ENCODE measurements at regions of chr15 and their contacts with region 1.

Region 1: DNA sequence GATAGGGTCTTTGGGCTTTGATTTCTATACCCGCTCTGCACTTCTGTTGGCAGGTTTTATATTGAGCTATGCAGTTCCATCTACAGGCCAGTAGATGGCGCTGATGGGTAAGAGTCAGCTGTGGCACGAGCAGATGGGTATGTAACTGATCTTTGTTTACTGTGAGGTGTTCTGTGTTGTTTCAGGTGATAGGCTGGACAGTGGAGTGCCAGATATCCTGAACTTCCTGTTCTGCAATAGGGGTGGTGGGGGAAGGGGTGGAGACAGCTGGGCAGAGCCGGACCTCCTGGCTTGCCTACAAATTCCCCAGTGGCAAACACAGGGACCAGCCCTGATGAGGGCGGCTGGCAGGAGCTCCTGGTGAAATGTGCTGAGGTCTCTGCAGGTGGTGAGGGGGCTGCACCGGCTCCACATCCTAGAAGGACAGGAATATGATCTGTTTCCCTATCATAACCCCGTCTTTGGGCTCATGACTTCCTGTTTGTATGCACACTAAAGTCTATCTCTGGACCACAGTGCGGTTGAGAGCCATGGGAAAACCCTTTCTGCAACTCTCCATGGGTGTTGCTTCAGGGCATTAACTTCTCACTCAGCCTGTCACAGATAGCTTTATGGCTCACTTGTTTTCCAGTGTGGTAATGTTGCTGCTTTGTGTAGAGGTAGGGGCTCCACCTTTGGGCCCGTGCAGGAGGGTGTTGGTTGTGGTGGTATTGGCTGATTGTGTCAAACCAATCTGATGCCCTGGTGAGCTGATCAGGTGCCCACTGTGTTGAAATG is 13.4 kb upstream of the FAM98B start:
- DNase-seq: peak; percentile 41
- H3K4me3 Mint-ChIP-seq: no peak overlapping the region
- H3K27ac Mint-ChIP-seq: no peak overlapping the region
- H3K4me1 Mint-ChIP-seq: no peaks in the 10 kb centered on the region
- H3K27me3 Mint-ChIP-seq: no peaks in the 10 kb centered on the region
- CTCF ChIP-seq: peak; percentile 45

Region 2: GRCh38 chr15:38351466-38351865 is 89.1 kb before region 1 on chr15:
- CTCF ChIA-PET with region 1: no interaction called
- intact Hi-C with region 1: no loop called
- DNase-seq: no peak
- H3K4me3 Mint-ChIP-seq: no peak overlapping the region
- H3K27ac Mint-ChIP-seq: no peak overlapping the region
- H3K4me1 Mint-ChIP-seq: no peaks in the 10 kb centered on the region
- H3K27me3 Mint-ChIP-seq: no peaks in the 10 kb centered on the region
- CTCF ChIP-seq: no peak

Region 3: GRCh38 chr15:38389924-38390542 is 50.5 kb before region 1 on chr15:
- CTCF ChIA-PET with region 1: no interaction called
- intact Hi-C with region 1: no loop called
- DNase-seq: peak; percentile 71
- H3K4me3 Mint-ChIP-seq: no peak overlapping the region
- H3K27ac Mint-ChIP-seq: no peak overlapping the region
- H3K4me1 Mint-ChIP-seq: no peaks in the 10 kb centered on the region
- H3K27me3 Mint-ChIP-seq: peaks cover 8% of the 10 kb centered on the region
- CTCF ChIP-seq: peak; percentile 41

Region 4: DNA sequence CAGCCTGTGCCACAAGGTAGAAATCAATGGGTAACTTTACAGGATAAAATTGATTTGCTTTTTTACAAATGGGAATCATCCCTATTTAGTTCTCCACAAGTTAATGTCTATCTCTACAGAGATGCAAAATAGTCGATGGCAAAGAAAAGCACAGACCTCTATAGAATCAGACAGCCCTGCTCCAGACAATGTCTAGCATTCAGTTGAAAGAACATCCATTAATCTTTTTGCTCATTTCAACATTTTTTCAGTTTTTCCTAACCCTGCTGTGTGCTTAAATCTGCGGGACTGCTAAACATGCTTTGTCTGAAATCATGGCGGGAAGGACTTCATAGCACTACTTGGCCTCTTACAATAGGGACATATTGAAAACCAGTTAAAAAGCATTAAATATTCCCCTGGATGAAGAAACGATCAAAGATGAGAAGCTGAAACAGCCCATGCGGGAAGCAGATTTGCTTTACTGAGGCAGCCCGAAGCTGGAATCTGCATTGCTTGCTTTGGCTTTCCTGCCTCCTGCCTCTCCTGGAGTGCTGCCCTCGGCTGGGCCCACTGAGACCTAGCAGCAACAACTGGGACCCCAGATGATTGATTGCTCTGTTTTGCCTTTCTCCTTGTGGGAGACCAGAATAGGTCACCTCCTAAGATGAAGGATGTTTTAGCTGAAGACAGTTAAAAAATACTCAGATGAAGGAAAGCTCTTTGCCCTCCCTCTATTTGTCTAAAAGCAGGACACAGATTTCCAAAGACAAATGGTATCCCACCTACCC is 162.5 kb after region 1 on chr15:
- CTCF ChIA-PET with region 1: no interaction called
- intact Hi-C with region 1: no loop called
- DNase-seq: no peak
- H3K4me3 Mint-ChIP-seq: no peak overlapping the region
- H3K27ac Mint-ChIP-seq: no peak overlapping the region
- H3K4me1 Mint-ChIP-seq: no peaks in the 10 kb centered on the region
- H3K27me3 Mint-ChIP-seq: no peaks in the 10 kb centered on the region
- CTCF ChIP-seq: no peak

Region 5: DNA sequence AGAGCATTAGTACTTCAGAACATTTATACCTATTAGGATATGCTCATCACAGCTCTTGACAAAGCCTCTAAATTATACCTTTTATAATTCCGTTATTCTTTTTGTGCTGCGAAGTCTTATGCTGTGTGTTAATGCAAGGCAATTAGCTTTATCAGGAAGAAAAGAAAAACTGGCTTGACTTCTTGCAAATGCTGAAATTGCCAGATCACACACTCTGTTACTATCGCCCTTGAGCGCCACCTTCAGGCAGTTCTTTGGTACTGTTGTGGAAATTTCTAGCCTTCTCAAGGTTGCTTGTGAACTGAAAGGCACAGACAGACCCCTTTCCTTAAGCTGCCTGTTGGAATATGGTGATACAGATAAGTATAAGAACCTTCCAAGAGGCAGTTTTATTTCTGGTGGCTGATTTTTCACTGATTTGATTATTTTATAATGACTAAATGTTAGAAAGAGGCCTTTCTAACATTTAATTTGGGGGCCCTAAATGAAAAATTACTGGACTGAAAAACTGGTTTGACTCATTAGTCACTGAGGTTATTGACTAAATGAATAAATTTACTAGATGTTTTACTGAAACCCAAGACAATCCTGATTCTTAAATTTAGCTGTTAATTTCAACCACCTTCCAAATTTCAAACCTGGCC is 250.3 kb after region 1 on chr15:
- CTCF ChIA-PET with region 1: interaction called, 10 read pairs
- intact Hi-C with region 1: no loop called
- DNase-seq: peak; percentile 62
- H3K4me3 Mint-ChIP-seq: no peak overlapping the region
- H3K27ac Mint-ChIP-seq: no peak overlapping the region
- H3K4me1 Mint-ChIP-seq: no peaks in the 10 kb centered on the region
- H3K27me3 Mint-ChIP-seq: no peaks in the 10 kb centered on the region
- CTCF ChIP-seq: peak; percentile 45

Region 6: DNA sequence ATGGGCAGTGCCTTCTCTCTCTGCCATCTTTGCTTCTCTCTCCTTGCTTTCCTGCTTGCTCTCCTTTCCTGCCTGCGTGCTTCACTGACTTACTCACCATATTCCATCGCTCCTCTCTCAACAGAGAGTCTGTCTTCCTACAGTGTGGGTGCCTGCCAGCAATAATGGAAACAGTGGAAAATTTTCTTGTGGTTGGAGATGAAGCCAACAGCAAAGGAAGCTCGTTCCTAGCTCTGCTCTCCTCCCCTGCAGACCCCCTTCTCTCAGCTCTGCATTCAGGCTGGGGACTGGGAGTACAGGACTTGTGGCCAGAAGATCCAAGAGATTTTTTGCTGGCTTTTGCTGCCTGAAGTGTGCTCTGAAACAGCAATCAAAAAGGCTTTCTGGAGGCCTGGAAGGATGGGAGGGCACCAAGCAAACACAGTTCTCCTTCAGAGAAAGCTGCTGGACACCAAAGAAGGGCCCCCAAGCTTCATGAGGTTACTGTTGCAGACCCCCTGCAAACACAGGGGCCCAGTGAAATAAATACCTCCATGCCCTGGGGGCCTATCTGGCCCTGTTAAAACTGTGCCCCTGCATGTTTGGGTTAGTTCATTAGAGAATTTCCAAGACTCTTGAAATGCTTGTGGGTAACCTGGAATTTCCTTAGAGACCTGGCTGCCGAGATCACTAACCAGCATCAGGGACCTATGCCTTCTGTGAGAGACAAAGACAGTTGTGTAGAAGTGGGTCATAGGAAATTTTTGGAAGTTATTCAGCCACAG is 273.9 kb after region 1 on chr15:
- CTCF ChIA-PET with region 1: no interaction called
- intact Hi-C with region 1: no loop called
- DNase-seq: no peak
- H3K4me3 Mint-ChIP-seq: no peak overlapping the region
- H3K27ac Mint-ChIP-seq: no peak overlapping the region
- H3K4me1 Mint-ChIP-seq: no peaks in the 10 kb centered on the region
- H3K27me3 Mint-ChIP-seq: no peaks in the 10 kb centered on the region
- CTCF ChIP-seq: no peak

Measured in Calu3 (cell line).